ENCODE measurements at regions of chr20 and their contacts with region 1.

Region 1: GRCh38 chr20:56574531-56575142 is 41.6 kb downstream of the FAM209B start:
- DNase-seq: no peak
- ATAC-seq: no peak

Region 2: DNA sequence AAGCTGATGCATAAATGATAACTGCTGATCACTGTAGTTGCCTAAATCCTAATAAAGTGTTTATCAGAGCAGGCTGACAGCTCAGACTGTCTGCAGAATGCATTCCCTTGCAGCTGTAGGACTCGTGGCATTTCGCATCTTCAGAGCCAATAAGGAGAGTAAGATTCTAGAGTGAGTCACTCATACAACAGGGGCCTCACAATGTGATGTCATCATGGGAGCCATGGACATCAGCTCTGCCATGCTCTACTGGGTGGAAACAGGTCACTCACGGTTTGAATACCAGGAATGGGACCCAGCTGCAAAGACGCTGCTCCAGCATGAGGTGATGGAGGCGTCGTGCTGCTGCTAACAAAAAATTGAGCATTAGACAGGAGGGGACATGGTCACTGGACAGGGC is 34.2 kb before region 1 on chr20:
- intact Hi-C with region 1: loop called (anchors 5 kb)
- DNase-seq: no peak
- ATAC-seq: no peak

Region 3: DNA sequence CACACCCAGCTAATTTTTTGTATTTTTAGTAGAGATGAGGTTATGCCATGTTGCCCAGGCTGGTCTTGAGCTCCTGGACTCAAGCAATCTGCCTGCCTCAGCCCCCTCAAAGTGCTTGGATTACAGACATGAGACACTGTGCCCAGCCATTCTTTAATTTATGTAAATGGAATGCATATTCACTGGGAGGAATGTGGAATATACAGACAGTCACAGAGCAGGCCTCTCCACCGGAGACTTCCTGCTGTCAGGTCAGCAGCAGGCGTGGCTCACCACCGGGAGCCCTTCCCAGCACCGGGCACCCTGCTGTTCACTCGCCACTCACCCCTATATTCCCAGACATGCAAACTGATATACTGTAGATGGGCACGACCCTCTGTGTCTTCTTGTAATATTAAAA is 137.5 kb after region 1 on chr20:
- intact Hi-C with region 1: no loop called
- DNase-seq: no peak
- ATAC-seq: no peak